ENCODE measurements at regions of chr10 and their contacts with region 1.

Region 1: GRCh38 chr10:23981520-23982309 is 227.2 kb upstream of the KIAA1217 start:
- DNase-seq: peak; percentile 17
- H3K4me3 ChIP-seq: no peak overlapping the region
- H3K27ac ChIP-seq: no peak overlapping the region
- H3K4me1 ChIP-seq: no peaks in the 10 kb centered on the region
- H3K27me3 ChIP-seq: no peaks in the 10 kb centered on the region
- CTCF ChIP-seq: peak in 1 of 2 donors; percentile 12

Region 2: DNA sequence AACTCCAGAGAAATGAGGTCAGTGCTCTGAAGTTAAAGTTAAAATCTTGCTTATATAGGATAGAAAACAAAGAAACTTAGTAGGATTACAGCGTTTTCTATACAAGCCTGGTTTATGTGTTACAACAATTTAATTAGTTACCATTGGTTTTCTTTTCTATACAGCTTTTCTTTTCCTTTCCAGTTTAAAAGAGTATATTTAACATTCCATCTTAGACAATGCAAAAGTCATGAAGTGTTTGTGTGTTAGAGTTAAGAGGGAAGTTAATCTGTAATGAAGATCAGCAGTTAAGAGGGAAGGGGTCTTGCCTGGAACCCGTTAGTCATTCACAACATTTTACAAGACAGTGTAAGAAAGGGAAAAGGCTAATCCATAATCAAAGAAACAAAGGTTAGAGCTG is 204.6 kb before region 1 on chr10:
- CTCF ChIA-PET with region 1: no interaction called
- dilution Hi-C with region 1: no loop called
- in situ Hi-C with region 1: no loop called
- intact Hi-C with region 1: no loop called
- DNase-seq: no peak
- H3K4me3 ChIP-seq: no peak overlapping the region
- H3K27ac ChIP-seq: no peak overlapping the region
- H3K4me1 ChIP-seq: no peaks in the 10 kb centered on the region
- H3K27me3 ChIP-seq: no peaks in the 10 kb centered on the region
- CTCF ChIP-seq: no peak

Region 3: GRCh38 chr10:23927576-23928325 is 54.0 kb before region 1 on chr10:
- CTCF ChIA-PET with region 1: no interaction called
- dilution Hi-C with region 1: loop called (anchors 5 kb)
- in situ Hi-C with region 1: no loop called
- intact Hi-C with region 1: no loop called
- DNase-seq: no peak
- H3K4me3 ChIP-seq: no peak overlapping the region
- H3K27ac ChIP-seq: no peak overlapping the region
- H3K4me1 ChIP-seq: no peaks in the 10 kb centered on the region
- H3K27me3 ChIP-seq: no peaks in the 10 kb centered on the region
- CTCF ChIP-seq: no peak

Region 4: GRCh38 chr10:24068741-24069140 is 87.0 kb after region 1 on chr10:
- CTCF ChIA-PET with region 1: no interaction called
- dilution Hi-C with region 1: no loop called
- in situ Hi-C with region 1: no loop called
- intact Hi-C with region 1: no loop called
- DNase-seq: no peak
- H3K4me3 ChIP-seq: no peak overlapping the region
- H3K27ac ChIP-seq: no peak overlapping the region
- H3K4me1 ChIP-seq: no peaks in the 10 kb centered on the region
- H3K27me3 ChIP-seq: peaks cover 3% of the 10 kb centered on the region
- CTCF ChIP-seq: no peak